Posterior vena cava (tissue), 2 donors: ENCODE measurements at regions of chr19 and their contacts with region 1.

Region 1: GRCh38 chr19:48965040-48965805 is at the start of gene FTL:
- DNase-seq: peak; percentile 99
- total RNA-seq, gene FTL: 2,854 to 3,275 TPM

Region 2: GRCh38 chr19:48770260-48770659 is 195.0 kb before region 1 on chr19:
- intact Hi-C with region 1: no loop called
- DNase-seq: no peak

Region 3: DNA sequence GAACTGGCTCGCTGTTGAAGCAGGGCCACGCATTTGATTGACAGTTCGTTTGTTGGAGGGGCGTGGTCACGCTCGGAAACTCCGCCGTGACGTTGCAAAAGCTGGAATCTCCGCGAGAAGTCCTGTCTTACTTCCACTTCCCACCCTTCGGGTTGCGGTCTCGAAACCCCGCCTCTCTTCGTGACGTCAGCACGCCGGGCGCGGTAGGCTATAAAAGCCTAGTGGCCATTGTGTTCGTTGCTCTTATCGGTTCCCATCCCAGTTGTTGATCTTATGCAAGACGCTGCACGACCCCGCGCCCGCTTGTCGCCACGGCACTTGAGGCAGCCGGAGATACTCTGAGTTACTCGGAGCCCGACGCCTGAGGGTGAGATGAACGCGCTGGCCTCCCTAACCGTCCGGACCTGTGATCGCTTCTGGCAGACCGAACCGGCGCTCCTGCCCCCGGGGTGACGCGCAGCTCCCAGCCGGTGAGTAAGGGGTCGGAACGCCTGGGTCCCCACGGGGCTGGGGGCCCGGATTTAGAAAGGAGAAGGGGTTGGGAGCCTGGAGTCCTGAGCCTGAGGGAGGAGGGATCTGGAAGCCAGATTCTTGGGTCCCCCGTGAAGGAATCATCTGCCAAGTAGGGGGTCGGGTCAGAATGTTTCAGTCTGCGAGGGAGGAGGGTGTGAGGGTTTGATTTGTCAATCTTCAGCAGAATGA is 92.9 kb before region 1 on chr19 and contains the start of gene PPP1R15A:
- intact Hi-C with region 1: loop called in 1 of 2 experiments (anchors 5 kb)
- DNase-seq: peak; percentile 99
- total RNA-seq, gene PPP1R15A: 72.8 to 172 TPM

Region 4: GRCh38 chr19:48899781-48900476 is 65.3 kb before region 1 on chr19 and contains the start of gene NUCB1:
- intact Hi-C with region 1: loop called in 1 of 2 experiments (anchors 10 kb)
- DNase-seq: peak; percentile 100
- total RNA-seq, gene NUCB1: 219 to 282 TPM

Region 5: GRCh38 chr19:48950159-48950558 is 15.1 kb before region 1 on chr19:
- intact Hi-C with region 1: no loop called
- DNase-seq: no peak

Region 6: GRCh38 chr19:50368649-50369570 is 1403.7 kb after region 1 on chr19:
- intact Hi-C with region 1: no loop called
- DNase-seq: peak; percentile 93